ENCODE measurements at regions of chr10 and their contacts with region 1.

Region 1: GRCh38 chr10:79444199-79445119 is 965 bp downstream of the ZCCHC24 start:
- DNase-seq: peak; percentile 40 to 91 (median 69)
- ATAC-seq: peak; percentile 50
- H3K4me3 ChIP-seq: peak overlapping the region; percentile 77 to 91
- H3K27ac ChIP-seq: peak overlapping the region; percentile 75 to 82
- H3K4me1 ChIP-seq: peaks cover 12 to 42% of the 10 kb centered on the region in 2 donors
- H3K27me3 ChIP-seq: peaks cover 0 to 16% of the 10 kb centered on the region in 2 donors
- CTCF ChIP-seq: no peak

Region 2: DNA sequence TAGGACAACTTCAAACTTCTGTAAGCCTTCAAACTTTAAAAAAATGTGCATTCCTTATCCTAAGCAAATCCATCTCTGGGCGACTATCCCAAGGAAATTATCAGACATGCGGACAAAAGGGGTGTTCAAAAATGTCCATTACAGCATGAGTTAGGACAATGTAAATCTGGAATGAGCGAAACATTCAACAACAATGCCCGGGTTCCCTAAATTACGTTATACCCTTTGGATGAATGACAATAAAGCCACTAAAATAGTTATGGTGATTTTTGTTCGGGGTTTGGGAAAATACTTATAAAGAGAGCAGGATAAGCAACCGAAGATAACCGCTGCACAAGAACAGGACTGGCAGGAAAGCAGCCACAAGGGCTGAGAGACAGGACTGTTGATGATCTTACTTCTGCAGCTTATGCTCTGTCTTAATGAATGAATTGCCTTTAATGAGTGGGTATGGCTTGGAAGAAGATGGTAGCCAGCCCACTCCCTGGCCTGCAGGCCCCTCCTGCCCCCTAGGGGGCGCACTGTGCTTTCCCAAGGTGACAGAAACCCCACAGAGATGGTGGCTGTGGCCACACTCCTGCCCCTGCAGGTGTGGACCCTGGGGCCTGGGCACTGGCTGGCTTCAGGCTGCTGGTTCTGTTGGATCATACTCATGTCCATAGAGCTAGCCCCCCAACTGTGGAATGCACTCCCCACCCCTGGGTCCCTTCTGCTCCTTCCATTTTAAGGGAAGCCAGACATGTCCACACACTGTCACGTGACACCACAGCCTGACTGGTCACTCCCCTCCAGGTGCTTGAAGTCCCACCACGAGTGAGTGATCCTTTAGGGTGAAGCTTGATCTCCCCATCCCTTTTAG is 44.1 kb before region 1 on chr10:
- intact Hi-C with region 1: loop called in 1 of 2 experiments (anchors 5 kb)
- DNase-seq: peak in 2 of 4 donors; percentile 28 to 87
- ATAC-seq: peak; percentile 45
- H3K4me3 ChIP-seq: no peak overlapping the region
- H3K27ac ChIP-seq: peak overlapping the region; percentile 81 to 87
- H3K4me1 ChIP-seq: peaks cover 68 to 76% of the 10 kb centered on the region in 2 donors
- H3K27me3 ChIP-seq: peaks cover 0 to 16% of the 10 kb centered on the region in 2 donors
- CTCF ChIP-seq: peak; percentile 64 to 72

Measured in left lung (tissue), 14 donors.